ENCODE measurements at regions of chr14 and their contacts with region 1.

Region 1: DNA sequence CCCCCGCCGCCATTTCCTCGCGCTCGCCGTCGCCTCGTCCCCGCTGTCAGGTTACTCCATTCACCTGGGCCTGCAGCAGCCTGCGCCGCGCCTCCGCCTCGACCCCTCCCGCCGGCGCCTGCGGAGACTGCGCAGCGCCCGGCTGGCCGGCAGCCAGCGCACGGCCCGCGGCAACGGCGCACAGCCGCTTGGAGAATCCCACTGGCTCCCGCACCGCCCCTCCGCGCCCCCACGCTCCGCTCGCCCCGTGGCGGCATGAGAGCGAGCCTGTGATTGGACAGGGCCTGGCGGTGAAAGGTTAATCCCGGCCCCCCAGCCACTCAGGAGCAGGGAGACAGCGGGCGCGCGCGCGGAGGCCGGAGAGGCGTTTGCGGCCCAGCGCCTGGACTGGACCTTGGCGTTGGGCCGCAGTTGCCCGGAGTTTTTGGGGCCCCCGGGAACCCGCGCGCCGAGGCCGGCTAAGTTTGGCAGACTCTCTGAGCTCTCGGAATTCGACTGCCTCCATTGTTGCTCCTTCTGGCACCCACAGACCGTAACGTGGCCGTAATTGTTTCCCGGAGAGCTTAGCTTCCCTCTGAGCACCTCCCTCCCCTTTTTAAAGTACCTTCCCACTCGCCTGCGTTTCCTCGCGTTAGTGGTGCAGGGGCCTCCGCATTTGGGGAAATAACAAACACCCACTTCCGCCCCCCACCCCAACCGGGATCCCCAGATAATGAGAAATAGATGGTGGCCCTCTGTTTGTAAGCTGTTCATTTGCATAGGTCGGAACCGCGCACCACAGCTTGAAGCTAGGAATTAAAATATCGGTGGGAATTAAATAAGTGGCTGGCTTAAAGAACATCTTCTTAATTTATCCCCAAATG is at the start of gene DICER1:
- DNase-seq: peak; percentile 96 to 98
- H3K4me3 ChIP-seq: peak within 1 kb of the TSS; percentile 65 to 76
- H3K27ac ChIP-seq: peak within 1 kb of the TSS; percentile 91 to 93
- H3K4me1 ChIP-seq: peaks cover 0 to 42% (median 16%) of the 10 kb centered on the region in 4 donors
- H3K27me3 ChIP-seq: no peaks in the 10 kb centered on the region
- CTCF ChIP-seq: no peak

Region 2: DNA sequence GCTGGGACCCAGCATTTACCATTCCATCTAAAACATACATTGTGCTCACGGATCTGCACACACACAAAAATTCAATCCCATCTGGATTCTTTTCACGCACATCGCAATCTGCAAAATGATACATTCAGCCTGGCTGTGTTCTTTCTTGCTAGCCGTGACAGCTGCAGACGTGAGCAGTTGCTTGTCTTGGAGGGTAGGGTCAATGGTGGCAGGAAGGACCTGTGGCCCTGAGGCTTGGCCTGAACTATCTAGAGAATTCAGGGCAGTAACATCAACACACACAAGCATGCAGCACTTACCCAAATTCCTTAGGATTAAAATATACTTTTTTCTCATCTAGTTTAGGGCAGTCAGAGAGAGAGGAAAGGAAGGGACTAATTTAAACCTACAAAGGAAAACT is 72.2 kb before region 1 on chr14:
- intact Hi-C with region 1: no loop called
- DNase-seq: no peak
- H3K4me3 ChIP-seq: no peak overlapping the region
- H3K27ac ChIP-seq: no peak overlapping the region
- H3K4me1 ChIP-seq: no peaks in the 10 kb centered on the region
- H3K27me3 ChIP-seq: no peaks in the 10 kb centered on the region
- CTCF ChIP-seq: no peak

Region 3: GRCh38 chr14:95134304-95134933 is 23.1 kb before region 1 on chr14:
- intact Hi-C with region 1: no loop called
- DNase-seq: no peak
- H3K4me3 ChIP-seq: no peak overlapping the region
- H3K27ac ChIP-seq: no peak overlapping the region
- H3K4me1 ChIP-seq: peaks cover 0 to 43% (median 11%) of the 10 kb centered on the region in 4 donors
- H3K27me3 ChIP-seq: no peaks in the 10 kb centered on the region
- CTCF ChIP-seq: no peak

Region 4: GRCh38 chr14:95319312-95320021 is 161.9 kb after region 1 on chr14 and contains the start of gene CLMN:
- intact Hi-C with region 1: loop called (anchors 10 kb)
- DNase-seq: no peak
- H3K4me3 ChIP-seq: peak within 1 kb of the TSS; percentile 83 to 94
- H3K27ac ChIP-seq: peak within 1 kb of the TSS; percentile 74 to 81
- H3K4me1 ChIP-seq: peaks cover 0 to 42% (median 27%) of the 10 kb centered on the region in 4 donors
- H3K27me3 ChIP-seq: no peaks in the 10 kb centered on the region
- CTCF ChIP-seq: no peak

Measured in tibial artery (tissue), 4 donors.